ENCODE measurements at regions of chr15 and their contacts with region 1.

Region 1: DNA sequence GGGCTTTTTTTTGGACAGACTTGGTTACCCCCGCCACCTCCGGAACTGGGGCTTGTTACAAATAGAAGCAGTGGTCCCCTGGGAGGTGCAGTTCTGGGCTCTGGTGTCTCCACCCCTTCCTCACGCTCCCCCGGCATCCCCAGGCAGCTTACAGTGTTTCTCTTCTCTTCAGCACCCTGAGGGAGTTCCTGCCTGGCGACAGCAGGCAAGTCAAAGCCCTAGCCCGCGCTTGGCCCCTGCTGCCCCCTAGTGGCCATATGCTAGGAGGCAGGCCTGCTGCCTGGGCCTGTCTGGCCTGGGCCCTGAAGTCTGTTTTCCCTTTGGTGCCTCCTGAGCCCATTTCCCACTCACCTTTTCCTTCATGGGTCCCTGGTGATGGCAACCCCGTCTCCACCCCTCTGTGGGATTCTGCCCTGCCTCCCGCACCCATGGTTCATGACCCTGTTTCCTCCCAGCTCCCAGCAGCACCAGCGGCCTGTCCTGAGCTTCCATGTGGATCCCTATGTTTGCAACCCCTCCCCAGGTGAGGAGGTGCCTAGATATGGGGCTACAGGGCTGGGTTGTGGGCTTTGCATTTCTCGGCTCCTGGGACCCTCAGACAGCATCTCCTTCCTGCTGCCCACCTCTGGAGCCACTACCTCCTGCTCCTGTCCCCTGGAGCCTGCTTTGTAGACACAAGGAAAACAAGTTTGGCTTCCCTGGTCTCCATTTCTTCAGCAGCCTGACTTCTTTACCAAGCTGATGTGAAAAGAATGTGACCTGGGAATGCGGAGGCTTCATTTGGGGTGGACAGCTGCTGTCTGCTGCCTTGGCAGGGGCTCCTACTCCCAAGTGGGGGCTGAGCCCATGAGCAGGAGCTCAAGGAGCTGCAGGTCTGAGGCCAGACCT is 2.2 kb downstream of the SNX22 start:
- DNase-seq: peak; percentile 83 to 92 (median 91)
- H3K4me3 ChIP-seq: peak overlapping the region in 1 of 7 experiments; percentile 42
- H3K27ac ChIP-seq: no peak overlapping the region
- H3K4me1 ChIP-seq: peaks cover 0 to 37% (median 22%) of the 10 kb centered on the region in 4 experiments
- H3K27me3 ChIP-seq: peaks cover 0 to 29% (median 9%) of the 10 kb centered on the region in 5 experiments

Region 2: DNA sequence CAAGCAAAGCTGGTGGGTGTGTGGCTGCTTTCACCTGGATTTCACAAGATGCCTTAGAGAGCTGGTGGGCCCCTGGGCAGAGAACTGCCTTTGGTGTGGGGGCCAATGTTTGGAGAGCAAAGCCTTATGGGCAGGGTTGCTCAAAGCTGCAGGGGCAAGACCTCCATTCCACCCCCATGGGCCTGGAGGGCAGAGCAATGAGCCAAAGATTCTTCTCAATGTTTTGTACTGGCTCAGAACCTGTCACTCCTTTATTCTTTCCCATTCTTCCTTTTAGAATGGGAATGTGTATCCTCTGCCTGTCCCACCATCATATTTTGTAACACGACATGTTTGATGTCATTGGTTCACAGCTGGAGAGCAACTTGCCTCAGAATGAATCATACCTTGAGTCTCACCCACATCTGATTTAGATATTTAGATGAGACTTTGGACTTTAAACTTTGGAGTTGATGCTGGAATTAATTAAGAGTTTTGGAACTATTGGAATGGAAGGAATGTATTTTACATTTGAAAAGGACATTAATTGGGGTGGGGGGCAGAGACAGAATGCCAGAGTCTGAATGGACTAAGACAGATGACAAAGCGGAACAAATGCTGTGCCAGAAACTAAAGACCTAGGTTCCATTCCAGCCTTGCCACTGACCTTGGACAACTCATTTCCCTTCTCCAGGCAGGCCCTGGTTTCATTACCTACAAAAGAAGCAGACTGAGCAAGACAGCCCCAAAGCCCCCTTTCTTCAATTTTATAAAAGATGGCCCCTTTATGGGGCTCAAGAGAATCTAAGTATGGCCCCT is 180.3 kb before region 1 on chr15:
- CTCF ChIA-PET with region 1: no interaction called
- POLR2A ChIA-PET with region 1: no interaction called
- DNase-seq: no peak
- H3K4me3 ChIP-seq: no peak overlapping the region
- H3K27ac ChIP-seq: no peak overlapping the region
- H3K4me1 ChIP-seq: peaks cover 3 to 22% (median 18%) of the 10 kb centered on the region in 4 experiments
- H3K27me3 ChIP-seq: no peaks in the 10 kb centered on the region

Region 3: GRCh38 chr15:64131547-64131946 is 22.2 kb before region 1 on chr15:
- CTCF ChIA-PET with region 1: interaction called, 20 read pairs
- POLR2A ChIA-PET with region 1: no interaction called
- DNase-seq: no peak
- H3K4me3 ChIP-seq: no peak overlapping the region
- H3K27ac ChIP-seq: no peak overlapping the region
- H3K4me1 ChIP-seq: no peaks in the 10 kb centered on the region
- H3K27me3 ChIP-seq: no peaks in the 10 kb centered on the region